Activated CD4-positive, alpha-beta memory T cell treated with anti-CD3 and anti-CD28 coated beads for 36 hours (primary cell): ENCODE measurements at regions of chr1 and their contacts with region 1.

Region 1: GRCh38 chr1:247210376-247211117 is 38.7 kb upstream of the ZNF124 start:
- DNase-seq: peak; percentile 98
- H3K4me3 Mint-ChIP-seq: peak overlapping the region; percentile 90
- H3K27ac Mint-ChIP-seq: peak overlapping the region; percentile 96
- H3K4me1 Mint-ChIP-seq: peaks cover 62% of the 10 kb centered on the region
- H3K27me3 Mint-ChIP-seq: no peaks in the 10 kb centered on the region

Region 2: DNA sequence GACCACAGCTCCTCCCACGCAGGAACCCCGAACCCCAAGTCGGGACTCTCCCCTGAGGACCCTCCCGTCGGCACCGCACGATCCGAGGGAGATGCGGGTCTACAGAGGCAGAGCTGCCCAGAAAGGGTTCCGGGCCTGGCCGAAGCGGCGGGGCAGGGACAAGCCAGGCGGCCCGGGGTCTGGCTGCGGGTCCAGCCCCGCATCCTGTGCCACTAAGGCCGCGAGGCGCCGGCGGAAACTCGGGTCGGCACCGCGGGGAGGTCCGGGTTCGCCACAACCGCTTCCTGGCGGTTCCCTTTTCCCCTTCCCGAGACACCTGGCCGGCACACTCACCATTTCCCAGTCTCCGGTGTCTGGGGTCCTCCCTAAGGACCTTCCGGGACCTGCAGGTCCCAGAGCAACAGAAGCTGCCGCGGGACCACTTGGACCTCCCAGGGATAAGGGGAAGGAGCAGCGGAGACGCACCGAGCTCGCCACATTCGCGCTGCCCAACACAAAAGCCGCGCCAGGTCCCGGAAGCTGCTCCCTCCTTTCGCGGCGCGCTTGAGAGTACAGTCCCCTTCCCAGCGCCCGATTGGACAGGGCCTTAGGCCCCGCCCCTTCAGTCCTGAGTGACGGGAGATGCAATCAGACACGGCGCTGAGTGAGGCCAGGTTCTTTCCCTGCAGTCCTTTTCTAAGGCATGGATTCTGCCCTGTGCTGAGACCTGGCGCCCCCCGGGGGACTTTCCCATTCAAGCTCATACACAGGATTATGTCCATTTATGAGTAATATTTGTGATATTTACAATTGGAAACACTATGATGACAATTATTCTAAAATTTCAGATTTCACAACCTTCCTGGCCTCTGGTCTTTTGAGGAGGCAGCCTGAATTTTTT is 132.0 kb before region 1 on chr1 and contains the start of gene ZNF670:
- CTCF ChIA-PET with region 1: no interaction called
- POLR2A ChIA-PET with region 1: no interaction called
- intact Hi-C with region 1: loop called (anchors 1 kb)
- DNase-seq: peak; percentile 96
- H3K4me3 Mint-ChIP-seq: peak within 1 kb of the TSS; percentile 90
- H3K27ac Mint-ChIP-seq: peak within 1 kb of the TSS; percentile 85
- H3K4me1 Mint-ChIP-seq: peaks cover 24% of the 10 kb centered on the region
- H3K27me3 Mint-ChIP-seq: peaks cover 3% of the 10 kb centered on the region
- total RNA-seq, gene ZNF670: 3.9 to 4.5 TPM

Region 3: GRCh38 chr1:247103859-247104591 is 106.5 kb before region 1 on chr1 and contains the start of gene ZNF669:
- CTCF ChIA-PET with region 1: no interaction called
- POLR2A ChIA-PET with region 1: no interaction called
- intact Hi-C with region 1: loop called (anchors 1 kb)
- DNase-seq: peak; percentile 96
- H3K4me3 Mint-ChIP-seq: peak within 1 kb of the TSS; percentile 87
- H3K27ac Mint-ChIP-seq: peak within 1 kb of the TSS; percentile 88
- H3K4me1 Mint-ChIP-seq: peaks cover 16% of the 10 kb centered on the region
- H3K27me3 Mint-ChIP-seq: peaks cover 24% of the 10 kb centered on the region
- total RNA-seq, gene ZNF669: 7.9 to 8.4 TPM

Region 4: DNA sequence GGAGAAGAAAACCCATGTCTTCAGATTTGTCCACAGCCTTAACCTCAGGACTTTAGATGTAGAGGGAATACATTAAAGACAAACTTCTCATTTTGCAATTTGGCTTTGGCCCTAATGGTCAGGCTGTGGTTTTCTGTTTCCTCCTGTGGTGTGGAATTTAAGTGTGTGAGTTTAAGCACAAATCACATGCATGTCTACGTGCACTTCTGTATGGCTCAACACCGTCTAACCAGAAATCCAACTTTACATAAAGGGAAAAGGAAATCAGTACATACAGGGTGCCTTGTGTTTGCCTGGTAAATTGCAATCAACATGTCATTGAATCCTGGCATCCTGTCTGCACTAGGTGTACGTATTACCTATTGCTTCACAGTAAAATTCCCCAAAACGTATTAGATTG is 37.6 kb before region 1 on chr1:
- CTCF ChIA-PET with region 1: no interaction called
- POLR2A ChIA-PET with region 1: no interaction called
- intact Hi-C with region 1: loop called (anchors 5 kb)
- DNase-seq: no peak
- H3K4me3 Mint-ChIP-seq: no peak overlapping the region
- H3K27ac Mint-ChIP-seq: no peak overlapping the region
- H3K4me1 Mint-ChIP-seq: peaks cover 15% of the 10 kb centered on the region
- H3K27me3 Mint-ChIP-seq: no peaks in the 10 kb centered on the region